ENCODE measurements at regions of chr1 and their contacts with region 1.

Region 1: GRCh38 chr1:61043010-61043820 is 39.1 kb upstream of the NFIA start:
- DNase-seq: peak; percentile 78 to 92
- ATAC-seq: peak; percentile 98

Region 2: DNA sequence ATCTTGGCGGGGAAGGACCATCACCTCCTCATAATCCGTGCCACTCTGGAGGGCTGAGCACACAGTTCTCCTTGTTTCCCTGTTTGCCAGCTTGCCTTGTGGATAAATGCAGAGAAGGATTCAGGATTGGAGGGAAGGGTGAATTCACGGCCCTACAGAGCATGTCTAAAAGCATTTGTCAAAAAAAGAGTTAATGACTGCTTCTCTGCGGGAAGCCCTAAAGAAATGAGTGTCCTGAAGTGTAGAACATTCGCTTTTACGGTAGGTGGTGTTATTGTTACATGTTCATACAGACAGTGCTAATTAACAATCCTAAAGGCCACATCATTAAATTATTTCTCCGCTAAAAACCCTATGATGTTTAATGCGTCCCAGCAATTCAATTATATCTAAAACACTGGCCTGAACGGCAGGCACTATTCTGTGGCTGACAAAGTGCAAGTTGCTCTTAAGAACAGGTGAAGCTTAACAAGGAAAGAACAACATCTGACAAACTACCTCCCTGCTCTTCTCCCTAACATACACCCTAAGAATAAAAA is 73.2 kb before region 1 on chr1:
- intact Hi-C with region 1: loop called in 1 of 2 experiments (anchors 5 kb)
- DNase-seq: no peak
- ATAC-seq: peak; percentile 64

Region 3: GRCh38 chr1:61116421-61116820 is 73.2 kb after region 1 on chr1:
- intact Hi-C with region 1: no loop called
- DNase-seq: no peak
- ATAC-seq: no peak